HEK293T (cell line): ENCODE measurements at regions of chr2 and their contacts with region 1.

Region 1: GRCh38 chr2:20225294-20226151 is 593 bp upstream of the SDC1 start:
- DNase-seq: peak; percentile 62

Region 2: GRCh38 chr2:20135631-20136050 is 89.9 kb before region 1 on chr2:
- CTCF ChIA-PET with region 1: interaction called, 19 read pairs
- POLR2A ChIA-PET with region 1: interaction called, 5 read pairs
- DNase-seq: peak; percentile 76

Region 3: DNA sequence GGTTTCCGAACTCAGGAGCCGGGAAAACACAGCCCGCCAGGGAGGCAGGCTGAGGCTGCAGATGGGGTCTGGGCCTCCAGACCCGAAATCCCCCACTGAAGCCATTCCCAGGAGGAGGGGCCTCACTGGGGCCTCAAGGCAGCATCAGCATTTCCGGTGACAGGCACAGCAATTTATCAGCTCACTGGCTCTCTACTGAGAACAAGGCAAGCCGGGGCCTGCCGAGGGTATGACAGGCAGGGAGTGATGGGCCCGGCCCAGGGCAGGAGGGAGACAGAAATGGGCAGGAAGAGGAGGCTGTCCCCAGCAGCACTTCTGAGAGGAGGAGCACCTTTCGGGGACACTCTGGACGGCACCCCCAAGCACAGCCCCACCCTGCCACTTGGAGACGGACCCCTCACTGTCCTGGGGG is 13.1 kb before region 1 on chr2:
- CTCF ChIA-PET with region 1: interaction called, 7 read pairs
- POLR2A ChIA-PET with region 1: interaction called, 13 read pairs
- DNase-seq: peak; percentile 45

Region 4: GRCh38 chr2:20282916-20283592 is 57.5 kb after region 1 on chr2:
- CTCF ChIA-PET with region 1: no interaction called
- POLR2A ChIA-PET with region 1: no interaction called
- DNase-seq: no peak